Activated CD4-positive, alpha-beta memory T cell treated with anti-CD3 and anti-CD28 coated beads, Interleukin-2, amount 10 ng/mL, durations not matched to agents 7 days and 5 days (primary cell): ENCODE measurements at regions of chr15 and their contacts with region 1.

Region 1: DNA sequence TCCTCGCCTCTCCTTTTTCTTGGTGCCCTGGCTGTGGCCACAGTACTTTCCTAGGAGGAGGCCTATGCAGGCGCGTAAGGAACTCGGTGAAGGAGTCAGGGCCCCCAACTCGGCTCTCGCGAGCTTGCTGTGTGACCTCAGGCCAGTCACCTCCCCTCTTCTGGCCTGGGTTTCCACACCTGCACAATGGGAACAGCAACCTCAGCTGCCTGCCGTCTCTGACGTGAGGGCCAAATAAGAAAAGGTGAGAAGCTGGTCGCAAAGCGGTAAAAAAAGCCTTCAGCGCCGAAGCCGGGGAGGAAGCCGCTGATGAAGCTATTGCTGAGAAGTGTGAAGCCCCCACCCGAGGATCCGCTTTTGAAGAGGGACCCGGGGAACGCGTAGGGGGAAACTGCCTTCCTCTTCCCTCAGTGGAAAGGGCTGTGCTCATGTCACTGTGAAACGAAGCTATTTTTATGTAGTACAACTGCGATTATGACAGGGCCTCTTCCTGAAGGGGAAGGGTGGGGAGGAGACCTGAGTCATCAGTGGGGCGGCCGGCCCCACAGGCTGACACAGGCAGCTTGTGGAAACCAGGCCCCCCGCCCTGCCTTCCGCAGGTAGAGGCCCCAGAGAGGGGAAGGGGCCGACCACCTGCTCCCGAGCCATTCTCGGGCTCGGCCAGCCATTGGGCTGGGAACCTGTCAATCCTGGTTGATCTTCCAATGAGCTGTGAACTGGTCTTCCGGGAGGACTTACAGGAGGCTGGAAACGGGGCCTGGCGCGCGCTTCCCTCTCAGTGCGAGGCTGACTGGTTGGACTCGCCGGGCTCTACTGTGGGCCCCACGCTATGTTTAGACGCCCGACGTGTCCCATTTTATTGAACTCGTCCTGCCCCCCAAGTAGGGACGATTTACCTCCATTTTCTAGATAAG is 18.0 kb upstream of the ANKDD1A start:
- DNase-seq: peak; percentile 98
- H3K4me3 Mint-ChIP-seq: peak overlapping the region; percentile 82
- H3K27ac Mint-ChIP-seq: peak overlapping the region; percentile 99
- H3K4me1 Mint-ChIP-seq: peaks cover 72% of the 10 kb centered on the region
- H3K27me3 Mint-ChIP-seq: no peaks in the 10 kb centered on the region

Region 2: DNA sequence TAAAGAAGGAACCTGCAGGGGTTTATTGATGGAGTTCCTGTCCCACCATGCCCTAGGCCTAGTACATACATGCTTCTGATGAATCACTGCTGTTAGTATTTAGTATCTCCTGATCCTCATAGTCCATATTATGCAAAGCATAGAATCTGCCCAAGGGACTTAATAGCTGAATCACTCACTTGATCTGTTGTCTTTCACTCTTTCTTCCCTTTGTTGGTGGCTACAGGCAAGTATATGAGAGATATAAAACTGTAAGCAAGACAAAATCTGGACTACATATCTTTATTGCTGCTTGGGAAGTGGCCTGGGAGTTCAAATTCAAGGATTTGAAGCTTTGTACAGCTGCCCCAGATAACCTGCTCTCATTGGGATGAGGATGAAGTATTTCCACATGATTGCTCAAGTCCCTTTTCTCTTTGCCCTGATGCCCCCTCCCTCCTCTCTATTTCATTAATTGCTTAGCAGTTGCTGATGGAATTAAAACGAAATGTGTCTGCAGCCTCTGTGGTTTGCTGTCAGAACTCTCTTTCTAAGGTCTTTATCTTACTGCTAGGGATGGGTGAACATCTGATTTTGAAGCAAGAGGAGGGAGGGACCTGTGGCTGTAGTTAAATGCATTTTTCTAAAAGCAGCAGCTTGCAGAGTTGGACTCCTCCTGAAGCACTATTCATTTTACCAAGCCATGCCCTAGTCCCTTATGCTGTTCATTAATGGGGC is 319.3 kb before region 1 on chr15:
- CTCF ChIA-PET with region 1: no interaction called
- POLR2A ChIA-PET with region 1: no interaction called
- DNase-seq: no peak
- H3K4me3 Mint-ChIP-seq: no peak overlapping the region
- H3K27ac Mint-ChIP-seq: no peak overlapping the region
- H3K4me1 Mint-ChIP-seq: peaks cover 20% of the 10 kb centered on the region
- H3K27me3 Mint-ChIP-seq: no peaks in the 10 kb centered on the region

Region 3: GRCh38 chr15:64755427-64755940 is 138.3 kb before region 1 on chr15:
- CTCF ChIA-PET with region 1: no interaction called
- POLR2A ChIA-PET with region 1: no interaction called
- DNase-seq: no peak
- H3K4me3 Mint-ChIP-seq: no peak overlapping the region
- H3K27ac Mint-ChIP-seq: no peak overlapping the region
- H3K4me1 Mint-ChIP-seq: no peaks in the 10 kb centered on the region
- H3K27me3 Mint-ChIP-seq: peaks cover 5% of the 10 kb centered on the region

Region 4: GRCh38 chr15:64781299-64781698 is 112.4 kb before region 1 on chr15:
- CTCF ChIA-PET with region 1: interaction called, 6 read pairs
- POLR2A ChIA-PET with region 1: interaction called, 15 read pairs
- DNase-seq: no peak
- H3K4me3 Mint-ChIP-seq: no peak overlapping the region
- H3K27ac Mint-ChIP-seq: no peak overlapping the region
- H3K4me1 Mint-ChIP-seq: peaks cover 22% of the 10 kb centered on the region
- H3K27me3 Mint-ChIP-seq: peaks cover 30% of the 10 kb centered on the region

Region 5: GRCh38 chr15:64825431-64826294 is 68.1 kb before region 1 on chr15 and contains the start of gene PIF1:
- CTCF ChIA-PET with region 1: interaction called, 10 read pairs
- POLR2A ChIA-PET with region 1: interaction called, 45 read pairs
- DNase-seq: peak; percentile 94
- H3K4me3 Mint-ChIP-seq: peak within 1 kb of the TSS; percentile 93
- H3K27ac Mint-ChIP-seq: peak within 1 kb of the TSS; percentile 89
- H3K4me1 Mint-ChIP-seq: peaks cover 41% of the 10 kb centered on the region
- H3K27me3 Mint-ChIP-seq: no peaks in the 10 kb centered on the region
- total RNA-seq, gene PIF1: 46.1 to 49.1 TPM

Region 6: GRCh38 chr15:64851503-64851840 is 42.3 kb before region 1 on chr15:
- CTCF ChIA-PET with region 1: interaction called, 4 read pairs
- POLR2A ChIA-PET with region 1: interaction called, 16 read pairs
- DNase-seq: no peak
- H3K4me3 Mint-ChIP-seq: no peak overlapping the region
- H3K27ac Mint-ChIP-seq: no peak overlapping the region
- H3K4me1 Mint-ChIP-seq: peaks cover 42% of the 10 kb centered on the region
- H3K27me3 Mint-ChIP-seq: no peaks in the 10 kb centered on the region

Region 7: DNA sequence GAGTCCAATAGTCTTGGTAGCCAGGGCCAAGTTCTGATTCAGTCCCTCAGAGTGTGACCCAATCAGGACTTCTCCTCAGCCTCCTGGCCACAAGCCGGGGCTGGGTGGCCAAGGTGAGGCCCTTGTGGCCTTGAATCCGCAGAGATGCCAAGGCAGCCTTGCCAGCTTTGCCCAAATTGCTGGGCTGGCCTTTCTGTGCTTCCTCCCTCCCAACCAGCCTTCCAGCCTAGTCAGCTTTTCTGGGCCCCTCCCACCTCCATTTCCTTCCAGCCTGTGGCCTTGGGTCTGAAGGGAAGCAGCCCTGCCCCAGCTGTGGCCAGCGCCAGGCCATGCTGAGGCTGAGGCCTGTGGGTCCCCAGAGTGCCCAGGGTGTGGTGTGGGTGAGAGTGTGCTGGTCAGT is 16.3 kb before region 1 on chr15:
- CTCF ChIA-PET with region 1: interaction called, 48 read pairs
- POLR2A ChIA-PET with region 1: interaction called, 182 read pairs
- DNase-seq: peak; percentile 49
- H3K4me3 Mint-ChIP-seq: no peak overlapping the region
- H3K27ac Mint-ChIP-seq: peak overlapping the region; percentile 85
- H3K4me1 Mint-ChIP-seq: peaks cover 59% of the 10 kb centered on the region
- H3K27me3 Mint-ChIP-seq: no peaks in the 10 kb centered on the region

Region 8: GRCh38 chr15:64911311-64912191 is 17.8 kb after region 1 on chr15 and contains the start of gene ANKDD1A:
- CTCF ChIA-PET with region 1: interaction called, 39 read pairs
- POLR2A ChIA-PET with region 1: interaction called, 78 read pairs
- DNase-seq: peak; percentile 70
- H3K4me3 Mint-ChIP-seq: peak within 1 kb of the TSS; percentile 71
- H3K27ac Mint-ChIP-seq: no peak within 1 kb of the TSS
- H3K4me1 Mint-ChIP-seq: peaks cover 34% of the 10 kb centered on the region
- H3K27me3 Mint-ChIP-seq: peaks cover 6% of the 10 kb centered on the region
- total RNA-seq, gene ANKDD1A: 14.2 to 15.1 TPM

Region 9: GRCh38 chr15:64950888-64951287 is 57.1 kb after region 1 on chr15:
- CTCF ChIA-PET with region 1: no interaction called
- POLR2A ChIA-PET with region 1: no interaction called
- DNase-seq: no peak
- H3K4me3 Mint-ChIP-seq: no peak overlapping the region
- H3K27ac Mint-ChIP-seq: no peak overlapping the region
- H3K4me1 Mint-ChIP-seq: no peaks in the 10 kb centered on the region
- H3K27me3 Mint-ChIP-seq: no peaks in the 10 kb centered on the region

Region 10: GRCh38 chr15:65286704-65287519 is 393.2 kb after region 1 on chr15 and contains the start of gene PARP16:
- CTCF ChIA-PET with region 1: no interaction called
- POLR2A ChIA-PET with region 1: interaction called, 13 read pairs
- DNase-seq: peak; percentile 94
- H3K4me3 Mint-ChIP-seq: peak within 1 kb of the TSS; percentile 81
- H3K27ac Mint-ChIP-seq: peak within 1 kb of the TSS; percentile 78
- H3K4me1 Mint-ChIP-seq: peaks cover 35% of the 10 kb centered on the region
- H3K27me3 Mint-ChIP-seq: no peaks in the 10 kb centered on the region
- total RNA-seq, gene PARP16: 14.9 to 15.7 TPM